CD4-positive, alpha-beta T cell (primary cell): ENCODE measurements at regions of chr12 and their contacts with region 1.

Region 1: GRCh38 chr12:53379389-53380103 is 430 bp upstream of the SP1 start:
- DNase-seq: peak in 12 of 14 experiments; percentile 80 to 100 (median 92)
- ATAC-seq: peak; percentile 76
- H3K4me3 ChIP-seq: peak overlapping the region; percentile 63
- H3K4me3 Mint-ChIP-seq: no peak overlapping the region
- H3K27ac ChIP-seq: peak overlapping the region; percentile 67 to 75
- H3K27ac Mint-ChIP-seq: no peak overlapping the region
- H3K4me1 ChIP-seq: peaks cover 52% of the 10 kb centered on the region
- H3K4me1 Mint-ChIP-seq: peaks cover 31% of the 10 kb centered on the region
- H3K27me3 ChIP-seq: no peaks in the 10 kb centered on the region
- H3K27me3 Mint-ChIP-seq: no peaks in the 10 kb centered on the region
- CTCF ChIP-seq: no peak

Region 2: DNA sequence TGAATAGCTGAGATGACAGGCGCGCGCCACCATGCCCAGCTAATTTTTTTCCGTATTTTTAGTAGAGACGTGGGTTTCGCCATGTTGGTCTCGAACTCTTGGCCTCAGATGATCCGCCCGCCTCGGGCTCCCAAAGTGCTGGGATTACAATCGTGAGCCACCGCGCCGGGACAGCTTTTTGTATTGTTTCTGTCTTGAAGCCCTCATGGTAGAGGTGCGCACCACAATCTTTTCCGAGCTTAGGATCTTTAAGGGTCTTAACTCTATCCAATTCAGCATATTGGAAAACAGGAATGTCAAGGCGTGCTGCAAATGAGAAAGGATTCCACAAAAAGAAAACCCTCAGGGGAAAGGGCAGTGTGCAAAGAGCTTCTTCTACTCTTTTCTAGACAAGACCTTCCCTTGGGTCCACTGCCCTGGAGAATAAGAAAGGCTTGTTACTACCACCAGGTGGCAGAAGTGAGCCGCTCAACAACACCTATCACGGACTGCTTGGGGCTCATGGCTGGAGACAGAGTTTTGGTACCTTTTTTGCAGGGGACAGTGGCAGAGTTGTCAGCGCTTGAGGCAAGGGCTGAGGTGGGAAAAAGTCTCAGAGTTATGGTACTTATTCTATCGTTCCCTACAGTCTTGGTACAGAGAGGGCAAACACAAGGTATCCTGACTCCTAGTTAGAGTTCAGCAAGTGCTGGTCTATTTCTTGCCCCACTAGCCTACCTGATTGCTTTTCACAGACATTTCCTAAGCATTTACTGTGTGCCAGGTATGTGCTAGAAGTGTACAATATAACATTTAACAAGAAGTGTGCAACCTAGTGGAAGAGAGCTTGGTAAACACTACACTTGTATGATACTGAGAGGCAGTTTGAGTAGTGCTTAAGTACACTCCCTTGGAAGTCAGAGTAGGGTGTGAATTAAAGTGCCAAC is 27.0 kb before region 1 on chr12:
- CTCF ChIA-PET with region 1: interaction called, 27 read pairs
- POLR2A ChIA-PET with region 1: interaction called, 17 read pairs
- intact Hi-C with region 1: loop called (anchors 1 to 2 kb)
- DNase-seq: peak; percentile 73 to 94 (median 82)
- ATAC-seq: peak; percentile 100
- H3K4me3 ChIP-seq: no peak overlapping the region
- H3K4me3 Mint-ChIP-seq: no peak overlapping the region
- H3K27ac ChIP-seq: no peak overlapping the region
- H3K27ac Mint-ChIP-seq: no peak overlapping the region
- H3K4me1 ChIP-seq: peaks cover 8% of the 10 kb centered on the region
- H3K4me1 Mint-ChIP-seq: peaks cover 7% of the 10 kb centered on the region
- H3K27me3 ChIP-seq: no peaks in the 10 kb centered on the region
- H3K27me3 Mint-ChIP-seq: no peaks in the 10 kb centered on the region
- CTCF ChIP-seq: peak; percentile 82

Region 3: DNA sequence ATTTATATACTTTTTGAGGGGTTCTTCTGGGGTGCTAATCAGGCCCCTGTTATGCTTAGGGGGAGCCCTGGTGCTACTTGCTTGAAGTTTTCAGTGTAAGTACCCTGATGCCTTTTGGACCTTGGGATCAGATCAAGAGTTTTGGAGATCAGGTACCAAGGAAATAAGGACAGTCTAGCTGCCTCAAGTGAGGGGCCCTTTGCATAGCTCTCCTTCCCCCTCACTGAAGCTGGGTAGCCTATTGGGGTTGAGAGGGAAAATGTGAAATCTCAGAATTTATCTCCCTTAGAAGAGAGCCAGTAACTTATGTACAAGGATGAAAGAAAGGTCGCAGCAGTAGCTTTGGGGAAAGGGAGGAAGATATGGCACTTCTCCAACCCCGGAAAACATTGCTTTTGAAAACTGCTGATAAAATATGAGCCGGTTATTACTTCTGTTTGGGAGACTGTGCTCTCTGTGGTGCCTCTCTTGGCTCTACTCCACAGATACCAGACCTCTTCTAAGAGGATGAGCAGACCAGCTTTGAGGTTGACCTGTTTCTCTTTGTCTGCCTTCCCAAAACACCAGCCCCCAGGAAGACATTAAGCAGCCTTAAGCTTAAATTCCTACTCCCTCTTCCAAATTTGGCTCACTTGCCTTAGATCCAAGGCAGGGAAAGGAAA is 35.3 kb after region 1 on chr12:
- CTCF ChIA-PET with region 1: no interaction called
- POLR2A ChIA-PET with region 1: interaction called, 13 read pairs
- intact Hi-C with region 1: loop called in 1 of 2 experiments (anchors 5 kb)
- DNase-seq: no peak
- ATAC-seq: no peak
- H3K4me3 ChIP-seq: no peak overlapping the region
- H3K4me3 Mint-ChIP-seq: no peak overlapping the region
- H3K27ac ChIP-seq: no peak overlapping the region
- H3K27ac Mint-ChIP-seq: peak overlapping the region; percentile 78
- H3K4me1 ChIP-seq: peaks cover 11% of the 10 kb centered on the region
- H3K4me1 Mint-ChIP-seq: peaks cover 63% of the 10 kb centered on the region
- H3K27me3 ChIP-seq: no peaks in the 10 kb centered on the region
- H3K27me3 Mint-ChIP-seq: no peaks in the 10 kb centered on the region
- CTCF ChIP-seq: no peak

Region 4: DNA sequence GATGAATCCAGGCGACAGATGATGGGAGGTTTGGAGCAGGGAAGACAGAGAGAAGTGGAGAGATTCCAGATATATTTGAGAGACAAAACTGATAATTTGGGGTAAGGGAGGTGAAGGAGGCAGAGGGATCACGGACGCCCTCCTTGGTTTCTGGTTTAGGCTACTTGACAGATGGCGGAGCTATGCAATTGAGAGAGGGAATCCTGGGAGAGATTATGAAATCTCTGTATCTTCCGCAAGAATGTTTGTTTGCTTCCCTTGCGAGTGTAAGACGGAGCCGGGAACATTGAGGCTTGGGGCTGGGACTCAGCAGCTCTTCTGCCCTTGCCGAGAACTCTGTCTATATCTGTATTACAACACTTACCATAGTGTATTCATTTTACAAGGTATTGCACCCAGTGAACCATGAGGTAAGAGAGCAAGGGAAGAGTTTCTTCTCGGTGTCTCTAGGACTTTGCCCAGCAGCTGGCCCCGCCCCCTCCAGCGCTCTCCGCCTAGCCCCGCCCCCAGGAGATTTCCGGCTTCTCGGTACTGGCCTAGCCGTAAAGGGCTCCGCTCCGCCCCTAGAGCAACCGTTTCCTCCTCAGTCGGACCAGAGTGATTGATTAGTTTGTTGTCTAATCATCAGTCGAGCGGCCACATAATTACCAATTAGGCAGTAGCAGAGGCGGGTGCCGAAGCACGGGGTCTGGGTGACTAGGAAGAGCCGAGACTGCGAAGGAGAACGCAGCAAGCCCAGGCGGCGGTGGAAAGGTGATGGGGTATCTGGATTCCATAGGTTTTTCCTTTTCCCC is 61.7 kb after region 1 on chr12 and contains the start of gene PRR13:
- CTCF ChIA-PET with region 1: no interaction called
- POLR2A ChIA-PET with region 1: interaction called, 11 read pairs
- intact Hi-C with region 1: loop called in 1 of 2 experiments (anchors 5 kb)
- DNase-seq: peak; percentile 96 to 100 (median 98)
- ATAC-seq: peak; percentile 97
- H3K4me3 ChIP-seq: peak within 1 kb of the TSS; percentile 61
- H3K4me3 Mint-ChIP-seq: peak within 1 kb of the TSS; percentile 94
- H3K27ac ChIP-seq: peak within 1 kb of the TSS; percentile 59 to 84
- H3K27ac Mint-ChIP-seq: peak within 1 kb of the TSS; percentile 87
- H3K4me1 ChIP-seq: peaks cover 37% of the 10 kb centered on the region
- H3K4me1 Mint-ChIP-seq: peaks cover 48% of the 10 kb centered on the region
- H3K27me3 ChIP-seq: no peaks in the 10 kb centered on the region
- H3K27me3 Mint-ChIP-seq: no peaks in the 10 kb centered on the region
- CTCF ChIP-seq: no peak
- total RNA-seq, gene PRR13: 133 to 142 TPM